ENCODE measurements at regions of chr5 and their contacts with region 1.

Region 1: GRCh38 chr5:102681407-102681983 is 73.6 kb upstream of the PAM start:
- DNase-seq: peak; percentile 2 to 79
- H3K4me3 ChIP-seq: no peak overlapping the region
- H3K27ac ChIP-seq: no peak overlapping the region
- H3K4me1 ChIP-seq: no peaks in the 10 kb centered on the region
- H3K27me3 ChIP-seq: no peaks in the 10 kb centered on the region
- CTCF ChIP-seq: peak; percentile 73 to 89 (median 81)
- EP300 ChIP-seq: no peak
- POLR2A ChIP-seq: no peak
- RAD21 ChIP-seq: peak; percentile 89 to 92

Region 2: GRCh38 chr5:102670224-102670836 is 11.2 kb before region 1 on chr5:
- CTCF ChIA-PET with region 1: interaction called, 12 read pairs
- POLR2A ChIA-PET with region 1: no interaction called
- DNase-seq: peak; percentile 1 to 75
- H3K4me3 ChIP-seq: peak overlapping the region in 2 of 4 experiments; percentile 42 to 45; a peak in 4 of 8 replicates
- H3K27ac ChIP-seq: no peak overlapping the region
- H3K4me1 ChIP-seq: peaks cover 0 to 6% (median 0%) of the 10 kb centered on the region in 4 experiments; a peak in 3 of 7 replicates
- H3K27me3 ChIP-seq: no peaks in the 10 kb centered on the region
- CTCF ChIP-seq: peak; percentile 62 to 83 (median 81)
- EP300 ChIP-seq: no peak
- POLR2A ChIP-seq: no peak
- RAD21 ChIP-seq: peak; percentile 48 to 57

Region 3: GRCh38 chr5:102700120-102700831 is 18.8 kb after region 1 on chr5:
- CTCF ChIA-PET with region 1: interaction called, 20 read pairs
- POLR2A ChIA-PET with region 1: no interaction called
- DNase-seq: no peak
- H3K4me3 ChIP-seq: no peak overlapping the region
- H3K27ac ChIP-seq: no peak overlapping the region
- H3K4me1 ChIP-seq: no peaks in the 10 kb centered on the region
- H3K27me3 ChIP-seq: peaks cover 0 to 1% (median 0%) of the 10 kb centered on the region in 4 experiments; a peak in 1 of 7 replicates
- CTCF ChIP-seq: no peak
- EP300 ChIP-seq: no peak
- POLR2A ChIP-seq: no peak
- RAD21 ChIP-seq: no peak

Region 4: DNA sequence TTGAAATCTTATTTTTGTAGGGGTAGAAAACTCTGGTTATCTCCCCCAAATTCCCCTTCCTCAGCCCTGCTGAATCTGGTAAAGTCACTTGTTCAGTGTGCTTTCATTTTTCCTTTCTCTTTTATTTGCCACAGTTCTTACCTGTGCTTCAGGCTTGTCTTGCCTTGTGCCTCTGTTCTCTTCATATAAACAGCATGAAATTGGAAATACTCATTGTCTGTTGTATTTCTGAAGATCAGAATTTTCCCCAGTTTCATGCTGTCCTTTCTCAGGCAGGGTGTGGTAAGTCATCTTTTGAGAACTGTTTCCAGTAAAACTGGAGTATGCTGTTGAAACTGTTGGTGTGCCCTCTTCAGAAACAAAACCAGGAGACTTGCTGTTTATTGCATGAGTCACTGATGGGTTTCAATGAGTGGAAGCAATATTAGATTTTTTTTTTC is 80.6 kb after region 1 on chr5:
- CTCF ChIA-PET with region 1: interaction called, 13 read pairs
- POLR2A ChIA-PET with region 1: no interaction called
- DNase-seq: no peak
- H3K4me3 ChIP-seq: no peak overlapping the region
- H3K27ac ChIP-seq: no peak overlapping the region
- H3K4me1 ChIP-seq: peaks cover 0 to 7% (median 3%) of the 10 kb centered on the region in 4 experiments; a peak in 4 of 7 replicates
- H3K27me3 ChIP-seq: no peaks in the 10 kb centered on the region
- CTCF ChIP-seq: no peak
- EP300 ChIP-seq: no peak
- POLR2A ChIP-seq: no peak
- RAD21 ChIP-seq: no peak

Region 5: GRCh38 chr5:102971697-102972293 is 290.3 kb after region 1 on chr5:
- CTCF ChIA-PET with region 1: interaction called, 14 read pairs
- POLR2A ChIA-PET with region 1: no interaction called
- DNase-seq: no peak
- H3K4me3 ChIP-seq: no peak overlapping the region
- H3K27ac ChIP-seq: no peak overlapping the region
- H3K4me1 ChIP-seq: no peaks in the 10 kb centered on the region
- H3K27me3 ChIP-seq: no peaks in the 10 kb centered on the region
- CTCF ChIP-seq: peak in 2 of 3 experiments; percentile 22 to 29; a peak in 2 of 4 replicates
- EP300 ChIP-seq: no peak
- POLR2A ChIP-seq: no peak
- RAD21 ChIP-seq: peak; percentile 37 to 48; a peak in 3 of 4 replicates

Region 6: DNA sequence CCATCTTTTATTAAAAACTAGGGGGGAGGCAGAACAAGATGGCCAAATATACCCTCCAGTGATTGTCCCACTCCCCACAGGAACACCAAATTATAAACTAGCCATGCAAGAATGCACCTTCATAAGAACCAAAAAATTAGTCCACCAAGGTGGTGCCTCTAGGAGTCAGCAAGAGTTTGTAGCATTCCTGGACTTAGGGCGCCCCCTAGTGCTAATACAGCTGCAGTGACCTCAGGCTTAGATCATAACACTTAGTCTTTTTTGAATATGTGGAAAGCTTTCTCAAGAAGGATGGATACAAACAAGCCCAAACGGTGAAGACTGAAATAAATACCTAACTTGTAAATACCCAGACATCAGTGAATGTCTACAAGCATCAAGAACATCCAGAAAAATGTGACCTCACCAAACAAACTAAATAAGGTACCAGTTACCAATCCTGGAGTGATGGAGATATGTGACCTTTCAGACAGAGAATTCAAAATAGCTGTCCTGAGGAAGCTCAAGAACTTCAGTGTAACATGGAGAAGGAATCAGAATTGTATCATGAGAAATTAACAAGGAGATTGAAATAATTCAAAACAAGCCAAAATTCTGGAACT is 457.9 kb after region 1 on chr5:
- CTCF ChIA-PET with region 1: interaction called, 22 read pairs
- POLR2A ChIA-PET with region 1: no interaction called
- DNase-seq: peak in 1 of 2 experiments; percentile 81
- H3K4me3 ChIP-seq: no peak overlapping the region
- H3K27ac ChIP-seq: no peak overlapping the region
- H3K4me1 ChIP-seq: no peaks in the 10 kb centered on the region
- H3K27me3 ChIP-seq: no peaks in the 10 kb centered on the region
- CTCF ChIP-seq: peak; percentile 20 to 92 (median 88)
- EP300 ChIP-seq: no peak
- POLR2A ChIP-seq: no peak
- RAD21 ChIP-seq: peak; percentile 98

Region 7: GRCh38 chr5:103708601-103709000 is 1027.1 kb after region 1 on chr5:
- CTCF ChIA-PET with region 1: no interaction called
- POLR2A ChIA-PET with region 1: no interaction called
- DNase-seq: no peak
- H3K4me3 ChIP-seq: no peak overlapping the region
- H3K27ac ChIP-seq: no peak overlapping the region
- H3K4me1 ChIP-seq: no peaks in the 10 kb centered on the region
- H3K27me3 ChIP-seq: no peaks in the 10 kb centered on the region
- CTCF ChIP-seq: no peak
- EP300 ChIP-seq: no peak
- POLR2A ChIP-seq: no peak
- RAD21 ChIP-seq: no peak